ENCODE measurements at regions of chr14 and their contacts with region 1.

Region 1: GRCh38 chr14:47917345-47917954 is 242.0 kb upstream of the MDGA2 start:
- DNase-seq: no peak
- H3K4me3 ChIP-seq: no peak overlapping the region
- H3K27ac ChIP-seq: no peak overlapping the region
- H3K4me1 ChIP-seq: peaks cover 0 to 3% (median 0%) of the 10 kb centered on the region in 4 donors
- H3K27me3 ChIP-seq: no peaks in the 10 kb centered on the region
- CTCF ChIP-seq: peak in 2 of 3 experiments; percentile 18 to 53
- EP300 ChIP-seq: no peak
- POLR2A ChIP-seq: no peak

Region 2: GRCh38 chr14:48398675-48399282 is 481.3 kb after region 1 on chr14:
- intact Hi-C with region 1: loop called (anchors 5 kb)
- DNase-seq: no peak
- H3K4me3 ChIP-seq: no peak overlapping the region
- H3K27ac ChIP-seq: no peak overlapping the region
- H3K4me1 ChIP-seq: no peaks in the 10 kb centered on the region
- H3K27me3 ChIP-seq: no peaks in the 10 kb centered on the region
- CTCF ChIP-seq: peak; percentile 31 to 70 (median 48)
- EP300 ChIP-seq: no peak
- POLR2A ChIP-seq: no peak

Region 3: GRCh38 chr14:48417715-48418500 is 500.5 kb after region 1 on chr14:
- intact Hi-C with region 1: no loop called
- DNase-seq: no peak
- H3K4me3 ChIP-seq: no peak overlapping the region
- H3K27ac ChIP-seq: no peak overlapping the region
- H3K4me1 ChIP-seq: no peaks in the 10 kb centered on the region
- H3K27me3 ChIP-seq: no peaks in the 10 kb centered on the region
- CTCF ChIP-seq: no peak
- EP300 ChIP-seq: no peak
- POLR2A ChIP-seq: no peak

Region 4: GRCh38 chr14:49173765-49174373 is 1256.4 kb after region 1 on chr14:
- intact Hi-C with region 1: loop called (anchors 10 kb)
- DNase-seq: no peak
- H3K4me3 ChIP-seq: no peak overlapping the region
- H3K27ac ChIP-seq: no peak overlapping the region
- H3K4me1 ChIP-seq: no peaks in the 10 kb centered on the region
- H3K27me3 ChIP-seq: no peaks in the 10 kb centered on the region
- CTCF ChIP-seq: peak; percentile 38 to 53 (median 49)
- EP300 ChIP-seq: no peak
- POLR2A ChIP-seq: no peak